Heart left ventricle (tissue), 16 donors: ENCODE measurements at regions of chr13 and their contacts with region 1.

Region 1: DNA sequence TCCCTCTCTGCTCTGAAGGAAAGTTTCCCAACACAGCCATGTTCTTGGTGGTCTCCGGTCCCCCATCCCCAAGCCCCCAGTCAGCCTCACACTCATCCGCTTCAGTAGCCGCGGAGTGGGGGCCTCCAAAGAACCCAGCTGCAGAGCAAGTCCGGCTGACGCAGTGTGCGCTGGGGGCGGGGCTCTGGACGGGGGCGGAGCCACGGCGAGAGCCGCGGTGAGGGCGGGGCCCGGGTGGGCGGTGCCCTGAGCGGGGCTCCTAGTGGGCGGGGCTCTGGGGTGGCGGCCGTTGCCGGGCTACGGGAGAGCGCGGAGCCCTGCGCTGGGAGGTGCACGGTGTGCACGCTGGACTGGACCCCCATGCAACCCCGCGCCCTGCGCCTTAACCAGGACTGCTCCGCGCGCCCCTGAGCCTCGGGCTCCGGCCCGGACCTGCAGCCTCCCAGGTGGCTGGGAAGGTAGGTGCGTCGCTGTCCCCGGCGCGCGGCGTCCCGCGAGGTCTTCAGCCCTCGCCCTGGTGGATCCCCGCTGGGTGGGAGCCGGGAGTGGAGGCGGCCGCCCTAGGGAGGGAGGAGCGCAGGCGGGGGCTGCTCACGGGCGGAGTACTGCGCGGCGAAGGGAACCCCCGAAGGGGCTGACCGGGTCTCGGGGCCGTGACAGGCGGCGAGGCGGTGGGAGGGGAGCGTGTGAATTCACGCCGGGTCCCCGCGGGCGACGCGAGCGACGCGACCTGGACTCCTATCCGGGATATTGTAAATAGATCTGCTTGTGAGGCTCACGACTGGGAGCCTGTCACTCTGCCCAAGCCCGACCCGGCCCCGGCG is 9.1 kb downstream of the TNFRSF19 start:
- DNase-seq: peak; percentile 94 to 97 (median 95)
- ATAC-seq: peak; percentile 98 to 99 (median 98)
- H3K4me3 ChIP-seq: peak overlapping the region; percentile 67 to 99 (median 90)
- H3K27ac ChIP-seq: peak overlapping the region; percentile 54 to 96 (median 94)
- H3K4me1 ChIP-seq: peaks cover 0 to 52% (median 11%) of the 10 kb centered on the region in 12 donors
- H3K27me3 ChIP-seq: peaks cover 0 to 19% (median 0%) of the 10 kb centered on the region in 9 donors
- CTCF ChIP-seq: no peak
- POLR2A ChIP-seq: peak in 1 of 2 donors; percentile 68

Region 2: DNA sequence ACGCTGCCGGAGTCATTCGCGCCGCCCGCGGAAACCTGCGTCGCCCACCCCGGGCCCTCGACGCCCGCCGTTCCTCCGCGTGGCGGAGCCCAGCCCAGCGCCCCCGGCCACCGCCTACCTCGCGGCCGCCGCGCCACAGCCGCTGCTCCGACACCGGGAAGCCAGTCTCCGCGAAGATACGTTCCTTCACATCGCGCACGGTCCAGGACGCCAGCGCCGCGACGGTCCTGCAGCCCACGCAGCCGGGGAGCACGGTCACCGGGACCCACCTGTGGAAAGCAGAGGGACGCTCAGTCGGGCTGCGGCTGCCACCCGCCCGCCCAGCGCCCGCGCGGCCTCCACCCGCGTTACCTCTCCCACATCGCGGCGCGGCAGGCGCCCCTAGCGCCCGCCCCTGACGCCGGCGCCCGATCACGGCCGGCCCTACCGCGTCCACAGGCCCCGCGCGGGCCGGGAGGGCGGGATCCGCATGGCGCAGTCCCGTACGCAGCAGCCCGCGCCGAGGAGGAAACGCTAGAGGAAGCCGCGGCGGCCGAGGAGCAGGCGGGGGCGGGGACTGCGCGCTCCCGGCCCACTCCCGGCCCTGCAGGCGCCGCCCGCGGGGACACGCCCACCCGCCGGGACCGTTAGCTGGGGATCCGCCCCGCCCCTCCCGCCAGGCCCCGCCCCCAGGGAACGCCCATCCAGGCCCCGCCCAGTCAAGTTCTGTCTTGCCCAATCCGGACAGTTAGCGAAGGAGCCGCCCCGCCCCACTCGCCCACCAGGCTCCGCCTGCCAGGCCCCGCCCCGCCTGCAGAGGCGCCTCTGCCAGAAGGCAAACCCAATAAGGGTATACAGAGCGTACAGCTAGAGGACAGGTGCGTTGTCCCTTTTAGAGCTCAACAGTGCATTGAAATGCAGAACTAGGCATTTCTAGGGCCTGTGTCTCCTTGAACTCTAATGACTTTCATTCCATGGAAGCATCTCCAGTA is 204.0 kb before region 1 on chr13:
- intact Hi-C with region 1: loop called in 5 of 10 experiments (anchors 10 kb)
- DNase-seq: peak; percentile 97 to 99 (median 98)
- ATAC-seq: peak; percentile 94 to 97 (median 96)
- H3K4me3 ChIP-seq: peak overlapping the region; percentile 64 to 93 (median 84)
- H3K27ac ChIP-seq: peak overlapping the region; percentile 48 to 96 (median 90)
- H3K4me1 ChIP-seq: peaks cover 3 to 57% (median 46%) of the 10 kb centered on the region in 12 donors
- H3K27me3 ChIP-seq: no peaks in the 10 kb centered on the region
- CTCF ChIP-seq: peak in 8 of 12 donors; percentile 11 to 56 (median 36)
- POLR2A ChIP-seq: peak in 1 of 2 donors; percentile 69

Region 3: DNA sequence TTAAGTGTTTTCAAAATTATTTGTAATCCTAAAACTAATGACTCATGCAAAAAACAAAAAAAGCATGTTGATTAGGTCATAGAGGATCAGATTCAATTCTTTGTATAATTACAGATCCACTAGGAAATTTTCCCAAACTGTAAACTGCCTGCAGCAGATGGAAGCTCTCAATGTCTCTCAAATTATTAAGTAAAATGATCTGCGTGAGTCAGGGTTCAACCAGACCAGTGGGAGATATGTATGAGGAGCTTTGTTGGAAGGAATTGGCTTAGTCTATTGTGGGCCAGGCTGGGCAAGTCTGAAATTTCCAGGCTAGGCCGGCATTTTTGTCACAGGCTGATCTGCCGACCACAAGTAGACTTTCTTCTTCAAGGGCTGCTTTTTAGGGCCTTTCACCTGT is 131.4 kb before region 1 on chr13:
- intact Hi-C with region 1: no loop called
- DNase-seq: peak in 1 of 5 donors; percentile 31
- ATAC-seq: peak in 3 of 4 donors; percentile 62 to 95 (median 78)
- H3K4me3 ChIP-seq: no peak overlapping the region
- H3K27ac ChIP-seq: no peak overlapping the region
- H3K4me1 ChIP-seq: no peaks in the 10 kb centered on the region
- H3K27me3 ChIP-seq: no peaks in the 10 kb centered on the region
- CTCF ChIP-seq: no peak
- POLR2A ChIP-seq: no peak

Region 4: DNA sequence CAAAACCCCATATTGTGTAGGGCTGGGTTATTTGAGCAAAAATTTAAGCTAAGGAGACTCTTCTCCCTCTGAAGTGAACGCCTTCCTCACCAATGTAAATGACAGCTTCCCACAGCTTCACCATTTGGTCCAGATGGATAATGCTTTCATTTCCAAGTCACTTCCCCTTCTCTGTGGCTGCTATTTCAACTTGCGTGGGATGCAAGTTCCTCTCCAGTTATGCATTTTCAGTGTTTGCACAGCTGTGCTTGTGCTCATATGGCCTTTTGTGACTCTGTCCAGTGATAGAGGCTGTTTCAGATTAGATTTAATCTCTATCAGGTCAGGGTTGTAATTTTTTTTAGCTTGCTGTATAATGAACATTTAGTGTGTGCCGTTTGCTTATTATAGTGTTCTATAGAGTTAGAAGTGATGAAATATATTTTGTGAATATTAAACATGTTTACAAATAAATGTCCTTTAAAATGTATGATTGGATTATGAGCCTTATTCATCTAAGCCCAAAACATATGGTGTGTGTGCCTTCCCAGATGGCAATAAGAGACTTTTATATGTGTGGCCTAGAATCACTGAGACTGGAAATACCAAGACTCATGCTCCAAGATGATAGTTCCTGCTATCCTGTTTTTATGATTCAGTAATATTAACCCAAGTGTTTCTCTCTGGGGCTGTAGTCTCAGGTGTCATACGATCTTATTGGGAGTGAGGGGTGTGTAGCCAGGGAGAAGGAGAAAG is 77.5 kb after region 1 on chr13:
- intact Hi-C with region 1: loop called in 2 of 10 experiments (anchors 5 to 10 kb)
- DNase-seq: peak in 4 of 5 donors; percentile 43 to 69 (median 56)
- ATAC-seq: peak; percentile 65 to 85 (median 72)
- H3K4me3 ChIP-seq: no peak overlapping the region
- H3K27ac ChIP-seq: peak overlapping the region in 11 of 12 donors; percentile 2 to 74 (median 56)
- H3K4me1 ChIP-seq: peaks cover 0 to 72% (median 46%) of the 10 kb centered on the region in 12 donors
- H3K27me3 ChIP-seq: no peaks in the 10 kb centered on the region
- CTCF ChIP-seq: no peak
- POLR2A ChIP-seq: no peak

Region 5: GRCh38 chr13:23673354-23673753 is 94.1 kb after region 1 on chr13:
- intact Hi-C with region 1: no loop called
- DNase-seq: no peak
- ATAC-seq: peak in 3 of 4 donors; percentile 55 to 74 (median 69)
- H3K4me3 ChIP-seq: no peak overlapping the region
- H3K27ac ChIP-seq: peak overlapping the region in 11 of 12 donors; percentile 6 to 66 (median 46)
- H3K4me1 ChIP-seq: peaks cover 0 to 36% (median 17%) of the 10 kb centered on the region in 12 donors
- H3K27me3 ChIP-seq: no peaks in the 10 kb centered on the region
- CTCF ChIP-seq: no peak
- POLR2A ChIP-seq: no peak

Region 6: DNA sequence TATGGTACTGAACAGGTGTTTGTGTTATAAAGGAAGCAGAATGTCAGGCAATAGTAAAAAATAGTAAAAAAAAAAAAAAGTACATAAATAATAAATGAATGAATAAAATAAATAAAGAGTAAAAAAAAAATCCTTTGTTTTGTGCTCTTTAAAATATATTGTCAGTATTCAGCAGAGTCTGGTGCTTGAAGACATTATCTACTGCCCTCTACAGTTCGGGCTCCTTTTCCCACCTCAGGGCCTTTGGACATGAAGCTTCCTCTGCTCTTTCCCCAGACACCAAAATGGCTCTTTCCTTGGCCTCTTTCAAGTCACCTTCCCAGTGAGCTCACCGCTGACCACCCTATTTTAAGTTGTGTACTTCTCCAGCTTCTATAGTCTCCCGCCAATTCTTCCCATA is 128.4 kb after region 1 on chr13:
- intact Hi-C with region 1: loop called in 2 of 10 experiments (anchors 10 kb)
- DNase-seq: no peak
- ATAC-seq: no peak
- H3K4me3 ChIP-seq: no peak overlapping the region
- H3K27ac ChIP-seq: no peak overlapping the region
- H3K4me1 ChIP-seq: peaks cover 0 to 19% (median 8%) of the 10 kb centered on the region in 12 donors
- H3K27me3 ChIP-seq: no peaks in the 10 kb centered on the region
- CTCF ChIP-seq: peak in 7 of 12 donors; percentile 5 to 40 (median 25)
- POLR2A ChIP-seq: no peak

Region 7: GRCh38 chr13:23794267-23795161 is 215.2 kb after region 1 on chr13:
- intact Hi-C with region 1: loop called in 1 of 10 experiments (anchors 10 kb)
- DNase-seq: no peak
- ATAC-seq: peak in 1 of 4 donors; percentile 49
- H3K4me3 ChIP-seq: peak overlapping the region in 3 of 12 donors; percentile 4 to 19 (median 13)
- H3K27ac ChIP-seq: peak overlapping the region in 5 of 12 donors; percentile 11 to 53 (median 44)
- H3K4me1 ChIP-seq: peaks cover 0 to 39% (median 10%) of the 10 kb centered on the region in 12 donors
- H3K27me3 ChIP-seq: no peaks in the 10 kb centered on the region
- CTCF ChIP-seq: no peak
- POLR2A ChIP-seq: no peak